ENCODE measurements at regions of chr12 and their contacts with region 1.

Region 1: GRCh38 chr12:48977315-48978281 is 524 bp upstream of the WNT1 start:
- DNase-seq: peak; percentile 92
- ATAC-seq: peak; percentile 69
- H3K4me3 Mint-ChIP-seq: peak overlapping the region; percentile 42
- H3K27ac Mint-ChIP-seq: peak overlapping the region; percentile 10
- H3K4me1 Mint-ChIP-seq: peaks cover 54% of the 10 kb centered on the region
- H3K27me3 Mint-ChIP-seq: peaks cover 73% of the 10 kb centered on the region

Region 2: GRCh38 chr12:48681738-48682532 is 295.7 kb before region 1 on chr12 and contains the start of gene KANSL2:
- CTCF ChIA-PET with region 1: no interaction called
- POLR2A ChIA-PET with region 1: no interaction called
- intact Hi-C with region 1: loop called in 1 of 2 experiments (anchors 5 kb)
- DNase-seq: peak; percentile 99
- ATAC-seq: peak; percentile 96
- H3K4me3 Mint-ChIP-seq: peak within 1 kb of the TSS; percentile 87
- H3K27ac Mint-ChIP-seq: peak within 1 kb of the TSS; percentile 91
- H3K4me1 Mint-ChIP-seq: peaks cover 41% of the 10 kb centered on the region
- H3K27me3 Mint-ChIP-seq: no peaks in the 10 kb centered on the region
- total RNA-seq, gene KANSL2: 44.0 to 59.8 TPM

Region 3: DNA sequence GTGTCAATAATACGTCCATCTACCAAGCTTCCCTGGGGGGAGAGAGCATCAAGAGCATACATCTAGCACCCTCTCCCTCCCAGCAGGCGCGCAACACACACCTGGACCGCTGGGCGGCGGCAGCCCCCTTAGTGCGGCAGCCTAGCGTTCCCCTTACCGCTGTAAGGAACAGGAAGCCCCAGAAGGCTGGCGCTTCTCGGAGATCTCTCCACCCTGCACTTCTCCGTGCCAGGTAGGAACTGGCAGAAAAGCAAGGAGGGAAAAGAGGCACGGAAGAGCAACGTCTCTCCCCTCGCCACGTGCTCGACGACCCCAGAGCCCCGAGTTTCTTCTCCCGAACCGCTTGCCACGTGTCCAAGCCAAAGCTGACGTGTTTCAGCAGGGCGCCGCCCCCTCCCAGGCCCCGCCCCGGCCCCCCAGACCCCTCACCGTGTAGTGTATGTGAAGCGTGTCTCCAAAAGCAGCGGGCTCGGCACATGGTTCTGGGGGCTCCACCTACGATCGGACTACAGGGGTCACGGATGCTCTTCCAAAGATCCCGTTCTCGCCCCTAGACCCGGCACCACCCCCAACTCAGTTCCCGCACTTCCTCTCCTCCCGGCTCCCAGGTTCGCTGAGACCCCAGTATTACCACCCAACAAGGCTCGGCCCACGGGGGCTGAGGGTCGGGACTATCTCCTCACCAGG is 52.8 kb before region 1 on chr12:
- CTCF ChIA-PET with region 1: interaction called, 54 read pairs
- POLR2A ChIA-PET with region 1: no interaction called
- intact Hi-C with region 1: loop called (anchors 1 to 2 kb)
- DNase-seq: peak; percentile 85
- ATAC-seq: peak; percentile 75
- H3K4me3 Mint-ChIP-seq: peak overlapping the region; percentile 83
- H3K27ac Mint-ChIP-seq: peak overlapping the region; percentile 93
- H3K4me1 Mint-ChIP-seq: peaks cover 52% of the 10 kb centered on the region
- H3K27me3 Mint-ChIP-seq: no peaks in the 10 kb centered on the region

Region 4: GRCh38 chr12:48988030-48988649 is 10.5 kb after region 1 on chr12:
- CTCF ChIA-PET with region 1: interaction called, 246 read pairs
- POLR2A ChIA-PET with region 1: no interaction called
- intact Hi-C with region 1: loop called in 1 of 2 experiments (anchors 2 kb)
- DNase-seq: peak; percentile 89
- ATAC-seq: peak; percentile 85
- H3K4me3 Mint-ChIP-seq: no peak overlapping the region
- H3K27ac Mint-ChIP-seq: no peak overlapping the region
- H3K4me1 Mint-ChIP-seq: no peaks in the 10 kb centered on the region
- H3K27me3 Mint-ChIP-seq: peaks cover 41% of the 10 kb centered on the region

Region 5: GRCh38 chr12:49347384-49348237 is 370.0 kb after region 1 on chr12:
- CTCF ChIA-PET with region 1: no interaction called
- POLR2A ChIA-PET with region 1: no interaction called
- intact Hi-C with region 1: loop called in 1 of 2 experiments (anchors 5 kb)
- DNase-seq: peak; percentile 84
- ATAC-seq: peak; percentile 67
- H3K4me3 Mint-ChIP-seq: peak overlapping the region; percentile 29
- H3K27ac Mint-ChIP-seq: no peak overlapping the region
- H3K4me1 Mint-ChIP-seq: peaks cover 39% of the 10 kb centered on the region
- H3K27me3 Mint-ChIP-seq: peaks cover 54% of the 10 kb centered on the region

Measured in activated CD4-positive, alpha-beta T cell treated with anti-CD3 and anti-CD28 coated beads for 36 hours (primary cell).